Activated CD4-positive, alpha-beta T cell treated with anti-CD3 and anti-CD28 coated beads for 36 hours (primary cell): ENCODE measurements at regions of chr17 and their contacts with region 1.

Region 1: DNA sequence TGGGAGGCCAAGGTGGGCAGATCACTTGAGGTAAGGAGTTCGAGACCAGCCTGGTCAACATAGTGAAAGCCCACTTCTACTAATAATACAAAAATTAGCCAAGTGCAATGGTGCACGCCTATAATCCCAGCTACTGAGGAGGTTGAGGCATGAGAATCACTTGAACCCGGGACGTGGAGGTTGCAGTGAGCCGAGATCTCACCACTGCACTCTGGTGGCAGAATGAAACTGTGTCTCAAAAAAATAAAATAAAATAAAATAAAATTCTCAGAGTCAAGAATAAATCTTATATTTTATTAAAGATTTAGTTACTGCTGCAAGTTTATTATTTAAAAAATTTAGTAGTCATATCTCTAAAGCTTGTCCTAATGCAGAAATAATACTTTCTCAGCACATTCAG is 29.7 kb downstream of the ARL4D start:
- DNase-seq: no peak
- ATAC-seq: no peak
- H3K4me3 Mint-ChIP-seq: no peak overlapping the region
- H3K27ac Mint-ChIP-seq: no peak overlapping the region
- H3K4me1 Mint-ChIP-seq: no peaks in the 10 kb centered on the region
- H3K27me3 Mint-ChIP-seq: peaks cover 17% of the 10 kb centered on the region

Region 2: DNA sequence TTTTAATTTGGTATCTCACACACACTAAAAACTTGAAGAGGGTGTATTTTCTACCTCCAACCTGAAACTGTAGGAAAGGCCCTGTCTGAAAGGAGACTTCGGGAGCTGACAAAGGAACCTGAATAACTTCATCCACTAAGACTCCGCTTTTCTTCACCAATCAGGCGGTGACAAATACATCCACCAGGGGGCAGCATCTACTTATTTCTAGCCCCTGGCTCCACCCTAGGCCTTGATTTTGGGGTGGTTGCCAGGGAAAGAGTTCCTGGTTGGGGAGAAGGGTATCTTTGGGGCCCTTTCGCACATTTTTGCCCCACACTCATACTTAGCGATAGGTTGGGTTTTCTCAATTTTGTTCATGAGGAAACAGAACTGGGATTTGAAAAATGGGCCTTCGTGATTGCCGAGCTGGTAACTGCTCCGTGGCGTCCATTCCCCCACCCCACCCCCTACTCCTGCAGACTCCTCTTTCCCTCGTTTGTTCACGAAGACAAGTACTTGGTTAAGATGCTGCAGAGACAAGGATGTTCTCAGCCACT is 34.5 kb before region 1 on chr17:
- CTCF ChIA-PET with region 1: interaction called, 11 read pairs
- POLR2A ChIA-PET with region 1: no interaction called
- intact Hi-C with region 1: loop called in 1 of 2 experiments (anchors 2 kb)
- DNase-seq: peak; percentile 93
- ATAC-seq: peak; percentile 55
- H3K4me3 Mint-ChIP-seq: no peak overlapping the region
- H3K27ac Mint-ChIP-seq: peak overlapping the region; percentile 31
- H3K4me1 Mint-ChIP-seq: peaks cover 20% of the 10 kb centered on the region
- H3K27me3 Mint-ChIP-seq: no peaks in the 10 kb centered on the region

Region 3: GRCh38 chr17:43517615-43518386 is 89.3 kb after region 1 on chr17:
- CTCF ChIA-PET with region 1: no interaction called
- POLR2A ChIA-PET with region 1: no interaction called
- intact Hi-C with region 1: no loop called
- DNase-seq: peak; percentile 13
- ATAC-seq: peak; percentile 71
- H3K4me3 Mint-ChIP-seq: no peak overlapping the region
- H3K27ac Mint-ChIP-seq: no peak overlapping the region
- H3K4me1 Mint-ChIP-seq: peaks cover 8% of the 10 kb centered on the region
- H3K27me3 Mint-ChIP-seq: no peaks in the 10 kb centered on the region